ENCODE measurements at regions of chr3 and their contacts with region 1.

Region 1: DNA sequence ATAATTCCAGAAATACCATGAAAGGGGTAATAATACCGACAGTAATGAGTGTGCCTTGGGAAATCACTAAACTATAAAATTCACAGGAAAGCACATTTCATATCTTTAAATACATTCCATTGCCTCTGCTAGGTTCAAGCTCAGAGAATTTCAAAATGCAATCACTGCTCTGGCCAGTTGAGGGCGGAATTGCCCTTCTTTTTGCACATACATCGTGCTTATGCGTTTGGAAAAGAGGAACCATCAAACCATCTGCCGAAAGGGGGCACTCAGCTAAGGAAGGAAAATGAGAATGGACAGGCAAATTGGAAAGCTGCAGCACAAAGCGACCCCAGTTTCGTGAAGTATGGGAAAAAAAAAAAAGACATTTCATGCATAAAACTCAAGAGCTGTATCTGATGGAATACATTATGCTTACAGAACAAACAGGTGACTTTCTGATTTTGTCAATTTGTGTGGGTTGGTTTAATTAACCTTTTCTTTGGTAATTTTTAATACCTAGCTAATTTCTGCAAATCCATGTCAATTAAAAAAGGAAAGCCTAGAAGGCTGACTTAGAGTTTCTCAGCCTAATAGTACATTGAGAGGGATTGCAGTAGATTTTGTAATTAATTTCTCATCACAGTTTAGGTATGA is 61.4 kb downstream of the TUSC7 start:
- DNase-seq: peak; percentile 74
- ATAC-seq: peak; percentile 94
- H3K4me3 ChIP-seq: no peak overlapping the region
- H3K27ac ChIP-seq: no peak overlapping the region
- H3K4me1 ChIP-seq: no peaks in the 10 kb centered on the region; the same call in 1 of the 2 replicates
- H3K27me3 ChIP-seq: no peaks in the 10 kb centered on the region
- CTCF ChIP-seq: peak; percentile 98

Region 2: DNA sequence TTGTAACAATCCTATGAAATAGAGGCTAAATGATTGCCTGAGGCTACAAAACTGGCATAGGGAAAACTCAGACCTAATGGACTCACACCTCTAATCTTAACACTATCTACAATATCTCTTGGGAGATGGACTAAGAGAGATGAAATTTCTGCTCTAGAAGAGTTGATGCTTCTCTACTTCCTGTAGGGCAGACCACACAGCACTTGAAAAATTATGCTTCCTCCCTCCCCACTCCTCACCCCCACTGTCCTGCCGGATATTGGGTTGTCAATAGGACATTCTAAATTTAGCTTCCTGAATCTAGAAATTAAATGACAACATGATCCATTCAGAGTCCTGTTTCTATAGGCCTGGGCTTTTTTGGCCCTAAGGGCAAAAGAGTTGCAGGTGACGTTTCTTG is 852.0 kb before region 1 on chr3:
- CTCF ChIA-PET with region 1: interaction called, 12 read pairs
- POLR2A ChIA-PET with region 1: no interaction called
- in situ Hi-C with region 1: no loop called
- intact Hi-C with region 1: no loop called
- DNase-seq: no peak
- ATAC-seq: no peak
- H3K4me3 ChIP-seq: no peak overlapping the region
- H3K27ac ChIP-seq: no peak overlapping the region
- H3K4me1 ChIP-seq: no peaks in the 10 kb centered on the region
- H3K27me3 ChIP-seq: no peaks in the 10 kb centered on the region
- CTCF ChIP-seq: no peak

Region 3: DNA sequence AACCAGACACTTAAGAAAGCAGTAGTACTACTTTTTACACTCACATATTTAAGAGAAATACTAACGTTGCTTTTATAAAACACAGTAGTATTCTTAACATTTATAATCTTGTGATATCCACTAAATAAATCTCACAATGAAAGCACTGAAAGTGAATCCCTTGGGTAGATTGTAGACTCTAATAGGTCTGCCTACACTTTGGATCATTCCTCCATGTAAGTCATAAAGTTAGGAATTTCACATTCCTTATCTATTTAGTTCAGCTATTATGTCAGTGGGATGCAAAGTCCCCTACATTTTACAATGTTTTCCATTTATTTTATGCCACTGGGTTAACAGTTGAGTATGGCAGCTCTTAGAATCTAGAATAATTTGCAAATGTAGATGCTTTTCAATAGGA is 656.3 kb before region 1 on chr3:
- CTCF ChIA-PET with region 1: interaction called, 13 read pairs
- POLR2A ChIA-PET with region 1: no interaction called
- in situ Hi-C with region 1: no loop called
- intact Hi-C with region 1: no loop called
- DNase-seq: no peak
- ATAC-seq: no peak
- H3K4me3 ChIP-seq: no peak overlapping the region
- H3K27ac ChIP-seq: no peak overlapping the region
- H3K4me1 ChIP-seq: no peaks in the 10 kb centered on the region
- H3K27me3 ChIP-seq: no peaks in the 10 kb centered on the region
- CTCF ChIP-seq: no peak

Region 4: DNA sequence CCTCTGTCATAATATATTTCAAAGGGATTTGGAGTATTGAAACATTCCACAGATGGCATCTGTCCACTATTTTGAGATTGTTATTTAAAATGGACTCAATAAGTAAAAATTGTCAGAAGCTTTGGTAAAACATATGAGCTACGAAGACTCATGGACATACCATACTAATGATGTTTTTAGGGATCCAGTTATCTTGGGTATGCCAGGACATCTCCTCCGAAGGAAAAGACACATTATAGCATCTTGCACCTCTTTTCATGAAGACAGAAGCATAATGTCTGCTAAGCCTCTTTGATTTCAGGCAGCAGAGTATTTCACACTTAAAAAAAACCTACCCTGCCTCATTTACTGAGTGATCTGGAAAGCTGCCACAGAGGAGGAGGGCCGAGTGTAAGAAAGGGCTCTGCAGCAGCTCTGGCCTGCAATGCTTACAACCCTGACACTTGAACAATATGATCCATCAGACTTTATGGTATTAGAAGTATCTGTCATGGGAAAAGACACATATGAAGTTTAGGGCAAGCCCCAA is 223.5 kb after region 1 on chr3:
- CTCF ChIA-PET with region 1: no interaction called
- POLR2A ChIA-PET with region 1: no interaction called
- in situ Hi-C with region 1: no loop called
- intact Hi-C with region 1: loop called (anchors 10 kb)
- DNase-seq: no peak
- ATAC-seq: no peak
- H3K4me3 ChIP-seq: no peak overlapping the region
- H3K27ac ChIP-seq: no peak overlapping the region
- H3K4me1 ChIP-seq: no peaks in the 10 kb centered on the region
- H3K27me3 ChIP-seq: no peaks in the 10 kb centered on the region
- CTCF ChIP-seq: no peak

Region 5: GRCh38 chr3:117526470-117527079 is 755.6 kb after region 1 on chr3:
- CTCF ChIA-PET with region 1: interaction called, 5 read pairs
- POLR2A ChIA-PET with region 1: no interaction called
- in situ Hi-C with region 1: no loop called
- intact Hi-C with region 1: loop called (anchors 2 kb)
- DNase-seq: no peak
- ATAC-seq: no peak
- H3K4me3 ChIP-seq: no peak overlapping the region
- H3K27ac ChIP-seq: no peak overlapping the region
- H3K4me1 ChIP-seq: no peaks in the 10 kb centered on the region
- H3K27me3 ChIP-seq: no peaks in the 10 kb centered on the region; the same call in 1 of the 2 replicates
- CTCF ChIP-seq: peak; percentile 69

Region 6: DNA sequence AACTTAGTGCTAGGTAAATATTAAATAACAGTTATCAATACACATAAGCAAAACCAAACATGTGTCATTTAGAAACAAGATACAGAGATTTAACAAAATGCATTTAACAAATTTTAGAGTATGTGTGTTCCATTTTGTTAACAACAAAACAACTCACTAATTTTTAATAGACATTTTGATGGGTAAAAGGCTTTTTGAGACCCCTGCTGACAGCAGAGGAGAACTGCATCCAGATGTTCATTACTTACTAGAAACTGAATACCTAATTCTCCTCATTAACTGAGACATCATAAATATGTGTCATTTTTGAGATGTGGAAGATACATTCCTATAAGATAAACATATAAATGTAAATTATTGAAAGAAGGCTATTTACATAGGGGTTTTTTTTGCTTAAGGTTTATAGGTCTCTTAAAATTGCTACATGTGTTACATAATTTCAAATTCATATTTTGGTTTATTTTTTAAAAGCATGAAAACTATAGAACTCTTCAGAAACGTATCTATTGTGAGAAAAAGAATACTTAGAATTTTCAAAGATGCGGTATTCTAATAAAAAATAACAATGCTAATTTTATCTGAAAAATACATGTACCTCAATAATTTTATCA is 948.5 kb after region 1 on chr3:
- CTCF ChIA-PET with region 1: no interaction called
- POLR2A ChIA-PET with region 1: no interaction called
- in situ Hi-C with region 1: no loop called
- intact Hi-C with region 1: loop called (anchors 2 kb)
- DNase-seq: no peak
- ATAC-seq: no peak
- H3K4me3 ChIP-seq: no peak overlapping the region
- H3K27ac ChIP-seq: no peak overlapping the region
- H3K4me1 ChIP-seq: no peaks in the 10 kb centered on the region
- H3K27me3 ChIP-seq: no peaks in the 10 kb centered on the region
- CTCF ChIP-seq: peak; percentile 75; the same call in 1 of the 2 replicates

Region 7: GRCh38 chr3:117997201-117998049 is 1226.5 kb after region 1 on chr3:
- CTCF ChIA-PET with region 1: no interaction called
- POLR2A ChIA-PET with region 1: no interaction called
- in situ Hi-C with region 1: no loop called
- intact Hi-C with region 1: loop called (anchors 10 kb)
- DNase-seq: peak; percentile 41
- ATAC-seq: peak; percentile 96
- H3K4me3 ChIP-seq: peak overlapping the region; percentile 32; a peak in 3 of 4 replicates
- H3K27ac ChIP-seq: no peak overlapping the region
- H3K4me1 ChIP-seq: no peaks in the 10 kb centered on the region
- H3K27me3 ChIP-seq: peaks cover 2% of the 10 kb centered on the region; the same call in 1 of the 2 replicates
- CTCF ChIP-seq: peak; percentile 92